T-cell (primary cell): ENCODE measurements at regions of chr6 and their contacts with region 1.

Region 1: DNA sequence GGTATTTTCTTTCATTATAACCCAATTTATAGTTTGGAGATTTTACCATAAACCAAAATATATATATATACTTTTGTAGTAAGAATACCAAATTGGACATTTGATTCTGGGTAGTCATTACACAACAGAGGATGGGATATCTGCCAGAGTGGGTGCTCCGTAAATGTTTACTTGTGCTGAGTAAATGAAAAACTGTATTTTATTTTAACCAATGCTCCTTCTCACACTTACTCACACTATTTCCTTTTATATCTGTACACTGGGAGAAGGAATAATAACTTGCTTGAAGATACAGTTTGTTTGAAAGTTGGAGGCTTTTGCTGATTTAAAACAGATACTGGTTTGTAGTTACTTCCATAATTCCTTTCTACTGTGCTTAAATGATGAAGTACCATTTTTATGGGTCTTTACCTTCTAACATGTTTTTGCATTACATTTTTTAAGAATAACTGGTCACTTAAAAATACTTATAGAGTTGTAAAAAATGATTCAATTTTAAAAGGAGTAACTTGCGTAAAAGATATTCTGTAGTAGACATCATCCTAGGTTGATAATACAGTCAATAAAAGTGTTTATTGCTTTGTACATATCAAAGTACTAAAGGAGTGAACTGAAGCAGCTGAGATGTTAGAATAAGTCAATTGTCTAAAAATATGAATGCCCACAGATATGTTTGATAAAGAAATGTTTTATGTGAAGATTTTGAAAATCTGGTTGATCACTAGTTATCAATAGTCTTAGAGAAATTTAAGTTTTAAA is 411.7 kb downstream of the UTRN start:
- DNase-seq: no peak
- ATAC-seq: no peak
- H3K4me3 ChIP-seq: no peak overlapping the region
- H3K4me3 Mint-ChIP-seq: no peak overlapping the region
- H3K27ac ChIP-seq: no peak overlapping the region
- H3K27ac Mint-ChIP-seq: peak overlapping the region in 1 of 2 donors; percentile 7
- H3K4me1 ChIP-seq: peaks cover 0 to 5% of the 10 kb centered on the region in 2 experiments
- H3K4me1 Mint-ChIP-seq: peaks cover 40 to 47% (median 40%) of the 10 kb centered on the region in 3 donors
- H3K27me3 ChIP-seq: no peaks in the 10 kb centered on the region
- H3K27me3 Mint-ChIP-seq: no peaks in the 10 kb centered on the region

Region 2: GRCh38 chr6:142966294-142966693 is 1730.5 kb before region 1 on chr6:
- CTCF ChIA-PET with region 1: interaction called in 1 of 2 experiments, 10 read pairs
- POLR2A ChIA-PET with region 1: no interaction called
- DNase-seq: no peak
- ATAC-seq: no peak
- H3K4me3 ChIP-seq: no peak overlapping the region
- H3K4me3 Mint-ChIP-seq: no peak overlapping the region
- H3K27ac ChIP-seq: no peak overlapping the region
- H3K27ac Mint-ChIP-seq: no peak overlapping the region
- H3K4me1 ChIP-seq: no peaks in the 10 kb centered on the region
- H3K4me1 Mint-ChIP-seq: no peaks in the 10 kb centered on the region
- H3K27me3 ChIP-seq: no peaks in the 10 kb centered on the region
- H3K27me3 Mint-ChIP-seq: no peaks in the 10 kb centered on the region

Region 3: DNA sequence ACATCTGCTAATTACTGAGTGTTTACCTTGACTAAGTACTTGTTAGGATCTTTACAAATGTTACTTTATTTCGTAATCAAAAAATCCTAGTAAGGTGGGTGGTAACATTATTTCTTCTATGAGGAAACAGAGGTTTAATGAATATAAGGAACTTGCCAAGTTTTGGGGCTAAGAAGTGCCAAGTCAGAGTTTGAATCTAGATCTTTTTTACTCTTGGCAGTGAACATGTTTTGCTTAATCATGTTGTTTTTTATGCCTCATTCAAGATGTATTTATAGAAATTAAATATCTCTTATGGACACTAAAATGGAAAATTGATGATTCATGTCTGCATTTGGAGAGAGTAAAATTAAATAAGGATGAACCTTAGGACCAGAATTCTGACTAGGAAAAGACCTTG is 17.9 kb before region 1 on chr6:
- CTCF ChIA-PET with region 1: no interaction called
- POLR2A ChIA-PET with region 1: no interaction called
- DNase-seq: no peak
- ATAC-seq: no peak
- H3K4me3 ChIP-seq: no peak overlapping the region
- H3K4me3 Mint-ChIP-seq: no peak overlapping the region
- H3K27ac ChIP-seq: no peak overlapping the region
- H3K27ac Mint-ChIP-seq: peak overlapping the region; percentile 15 to 39
- H3K4me1 ChIP-seq: peaks cover 2 to 12% of the 10 kb centered on the region in 2 experiments
- H3K4me1 Mint-ChIP-seq: peaks cover 23 to 35% (median 34%) of the 10 kb centered on the region in 3 donors
- H3K27me3 ChIP-seq: no peaks in the 10 kb centered on the region
- H3K27me3 Mint-ChIP-seq: no peaks in the 10 kb centered on the region

Region 4: DNA sequence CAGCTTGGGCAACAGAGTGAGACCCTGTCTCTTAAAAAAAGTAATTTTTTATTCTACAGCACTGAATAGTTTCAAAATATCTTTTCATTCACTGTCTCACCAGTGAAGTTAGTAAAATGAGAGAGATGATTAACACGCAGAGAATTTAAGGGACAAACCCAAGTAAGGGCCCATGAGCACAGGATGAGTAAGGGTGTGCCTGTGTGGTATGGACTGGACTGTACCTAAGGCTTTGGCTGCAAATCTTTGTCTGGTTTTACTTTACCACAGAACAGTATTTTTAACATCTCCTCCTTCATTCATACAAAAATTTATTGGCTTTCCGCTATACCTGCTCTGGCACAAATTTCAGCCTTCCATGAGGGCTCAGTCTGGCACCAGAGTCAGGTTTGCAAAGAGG is 21.6 kb after region 1 on chr6:
- CTCF ChIA-PET with region 1: no interaction called
- POLR2A ChIA-PET with region 1: no interaction called
- DNase-seq: no peak
- ATAC-seq: no peak
- H3K4me3 ChIP-seq: no peak overlapping the region
- H3K4me3 Mint-ChIP-seq: no peak overlapping the region
- H3K27ac ChIP-seq: no peak overlapping the region
- H3K27ac Mint-ChIP-seq: no peak overlapping the region
- H3K4me1 ChIP-seq: peaks cover 0 to 2% of the 10 kb centered on the region in 2 experiments
- H3K4me1 Mint-ChIP-seq: peaks cover 9 to 30% (median 25%) of the 10 kb centered on the region in 3 donors
- H3K27me3 ChIP-seq: no peaks in the 10 kb centered on the region
- H3K27me3 Mint-ChIP-seq: no peaks in the 10 kb centered on the region

Region 5: DNA sequence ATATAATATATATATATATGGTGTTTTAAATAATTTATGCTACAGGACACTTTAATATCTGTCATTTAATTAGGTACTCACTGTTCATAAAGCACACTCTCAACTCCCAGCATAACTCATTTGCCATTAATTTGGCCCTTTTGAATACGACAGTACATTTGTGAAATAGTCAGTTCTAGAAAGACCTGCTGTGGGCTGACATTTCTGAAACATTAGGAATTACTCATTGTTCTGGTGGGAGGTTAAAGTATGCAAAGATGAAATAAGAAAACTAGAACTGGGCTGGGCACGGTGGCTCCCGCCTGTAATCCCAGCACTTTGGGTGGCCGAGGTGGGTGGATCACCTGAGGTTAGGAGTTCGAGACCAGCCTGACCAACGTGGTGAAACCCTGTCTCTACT is 85.8 kb after region 1 on chr6:
- CTCF ChIA-PET with region 1: no interaction called
- POLR2A ChIA-PET with region 1: no interaction called
- DNase-seq: no peak
- ATAC-seq: no peak
- H3K4me3 ChIP-seq: no peak overlapping the region
- H3K4me3 Mint-ChIP-seq: no peak overlapping the region
- H3K27ac ChIP-seq: no peak overlapping the region
- H3K27ac Mint-ChIP-seq: no peak overlapping the region
- H3K4me1 ChIP-seq: no peaks in the 10 kb centered on the region
- H3K4me1 Mint-ChIP-seq: peaks cover 0 to 8% (median 2%) of the 10 kb centered on the region in 3 donors
- H3K27me3 ChIP-seq: no peaks in the 10 kb centered on the region
- H3K27me3 Mint-ChIP-seq: no peaks in the 10 kb centered on the region